A673 (cell line): ENCODE measurements at regions of chrX and their contacts with region 1.

Region 1: DNA sequence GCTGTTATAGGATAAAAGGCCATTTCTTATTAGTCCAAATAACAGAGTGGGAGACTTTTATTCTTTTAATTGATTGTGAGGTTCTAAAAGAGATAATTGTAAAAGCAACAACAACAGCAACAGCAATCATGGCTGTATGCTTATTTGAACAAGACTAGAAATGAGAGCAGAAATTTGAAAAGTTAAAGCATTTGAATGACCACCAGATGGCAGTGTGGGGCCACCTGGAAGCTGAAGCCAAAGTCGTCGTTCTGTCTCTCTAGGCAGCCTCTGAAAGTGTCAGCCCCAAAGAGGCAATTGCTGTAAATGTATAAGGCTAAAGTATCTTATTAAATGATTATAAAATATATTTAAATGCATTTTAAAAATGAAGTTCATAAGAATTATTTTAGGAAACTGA is 42.2 kb downstream of the SH2D1A start:
- DNase-seq: peak; percentile 71
- H3K4me3 ChIP-seq: no peak overlapping the region
- H3K27ac ChIP-seq: no peak overlapping the region
- H3K4me1 ChIP-seq: no peaks in the 10 kb centered on the region
- H3K27me3 ChIP-seq: no peaks in the 10 kb centered on the region
- CTCF ChIP-seq: peak; percentile 73

Region 2: DNA sequence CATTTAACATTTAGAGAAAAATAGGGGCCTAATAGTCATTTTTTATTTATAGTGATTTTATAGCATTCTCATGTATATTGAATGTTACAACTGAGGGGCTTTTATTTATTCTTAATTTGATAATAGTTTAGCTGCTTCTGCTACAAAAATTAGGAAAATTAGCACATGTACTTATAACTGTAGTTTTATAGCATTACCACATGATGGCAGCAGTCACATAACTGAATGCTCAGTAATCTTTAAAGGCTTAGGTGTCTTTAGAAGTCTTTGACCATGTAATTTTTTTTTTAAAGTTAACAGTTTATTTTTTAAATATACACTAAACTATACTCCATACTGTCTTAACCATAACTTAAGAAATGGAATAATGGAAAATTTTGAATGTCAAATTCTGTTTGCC is 290.5 kb before region 1 on chrX:
- CTCF ChIA-PET with region 1: no interaction called
- POLR2A ChIA-PET with region 1: no interaction called
- intact Hi-C with region 1: loop called (anchors 5 kb)
- DNase-seq: peak; percentile 55
- H3K4me3 ChIP-seq: no peak overlapping the region
- H3K27ac ChIP-seq: no peak overlapping the region
- H3K4me1 ChIP-seq: peaks cover 3% of the 10 kb centered on the region
- H3K27me3 ChIP-seq: no peaks in the 10 kb centered on the region
- CTCF ChIP-seq: peak; percentile 72